BJ (cell line): ENCODE measurements at regions of chr5 and their contacts with region 1.

Region 1: GRCh38 chr5:155136216-155136850 is 122.8 kb downstream of the KIF4B start:
- DNase-seq: no peak
- H3K4me3 ChIP-seq: no peak overlapping the region
- H3K27me3 ChIP-seq: no peaks in the 10 kb centered on the region; the same call in 1 of the 2 replicates
- CTCF ChIP-seq: no peak

Region 2: DNA sequence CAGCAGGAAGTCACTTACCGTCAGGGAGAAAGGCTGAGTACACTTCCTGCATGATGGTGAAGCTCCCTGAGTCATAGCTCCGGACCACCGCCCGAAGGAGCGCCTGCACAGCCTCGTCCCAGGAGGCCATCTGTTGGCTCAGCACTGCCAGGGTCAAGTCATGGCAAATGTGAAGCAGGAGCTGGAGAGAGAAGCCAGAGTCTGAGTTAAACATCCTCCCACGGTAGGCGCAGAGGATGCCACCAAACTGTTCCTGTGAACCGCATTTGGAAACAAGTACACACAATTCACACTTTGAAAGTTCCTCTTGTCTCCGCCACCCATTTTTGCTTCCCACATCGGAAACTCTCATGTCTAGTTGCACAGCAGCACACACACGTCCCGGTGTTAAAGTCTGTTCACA is 244.0 kb before region 1 on chr5:
- CTCF ChIA-PET with region 1: no interaction called
- POLR2A ChIA-PET with region 1: no interaction called
- DNase-seq: no peak
- H3K4me3 ChIP-seq: no peak overlapping the region
- H3K27me3 ChIP-seq: no peaks in the 10 kb centered on the region
- CTCF ChIP-seq: no peak

Region 3: DNA sequence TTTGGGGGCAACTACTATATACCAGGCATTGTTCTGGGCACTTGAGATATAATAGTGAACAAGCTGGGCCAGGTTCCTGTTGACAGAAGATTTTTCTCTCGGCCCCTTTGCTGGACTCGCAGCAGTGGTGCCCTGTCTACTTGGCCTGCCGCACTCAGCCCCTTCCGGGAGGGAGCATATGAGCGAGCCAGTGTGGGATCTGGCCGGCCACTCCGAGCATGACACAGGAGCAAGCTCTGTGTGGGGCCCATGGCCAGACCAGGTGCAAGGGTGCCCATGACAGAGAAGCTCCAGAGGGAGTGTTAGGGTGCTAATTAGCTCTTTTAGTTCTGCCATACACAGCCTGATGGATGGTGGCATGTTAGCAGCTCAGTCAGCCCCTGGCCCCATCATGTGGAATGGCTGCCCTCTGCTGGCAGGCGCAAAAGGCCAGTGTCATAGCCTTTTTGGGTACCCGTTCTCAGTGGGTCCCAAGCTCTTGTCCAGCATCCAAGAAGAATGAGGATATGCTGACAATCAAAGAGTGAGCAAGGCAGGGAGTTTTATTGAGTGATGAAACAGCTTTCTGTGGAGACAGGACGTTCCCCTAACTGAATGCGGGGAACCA is 132.1 kb before region 1 on chr5:
- CTCF ChIA-PET with region 1: no interaction called
- POLR2A ChIA-PET with region 1: no interaction called
- DNase-seq: no peak
- H3K4me3 ChIP-seq: no peak overlapping the region
- H3K27me3 ChIP-seq: no peaks in the 10 kb centered on the region
- CTCF ChIP-seq: peak; percentile 52

Region 4: DNA sequence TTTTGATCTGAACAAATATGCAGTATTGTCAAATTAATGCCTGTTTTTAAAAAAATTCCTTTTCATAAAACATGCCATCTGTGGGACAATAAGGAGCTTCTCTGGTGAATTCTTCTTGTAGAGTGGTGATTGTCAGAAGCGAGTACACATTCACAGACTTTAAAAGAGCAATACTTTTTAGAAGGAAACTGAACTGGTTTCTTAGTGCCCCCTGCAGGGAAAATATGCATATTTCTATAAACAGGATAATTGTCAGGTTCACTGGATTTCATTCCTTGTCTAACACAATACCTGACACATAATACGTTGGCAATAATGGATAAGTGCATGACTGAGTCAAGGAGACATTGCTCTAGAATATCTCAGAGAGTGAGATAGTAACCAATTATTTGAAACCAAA is 10.9 kb after region 1 on chr5:
- CTCF ChIA-PET with region 1: interaction called, 12 read pairs
- POLR2A ChIA-PET with region 1: no interaction called
- DNase-seq: no peak
- H3K4me3 ChIP-seq: no peak overlapping the region
- H3K27me3 ChIP-seq: no peaks in the 10 kb centered on the region
- CTCF ChIP-seq: peak; percentile 28

Region 5: DNA sequence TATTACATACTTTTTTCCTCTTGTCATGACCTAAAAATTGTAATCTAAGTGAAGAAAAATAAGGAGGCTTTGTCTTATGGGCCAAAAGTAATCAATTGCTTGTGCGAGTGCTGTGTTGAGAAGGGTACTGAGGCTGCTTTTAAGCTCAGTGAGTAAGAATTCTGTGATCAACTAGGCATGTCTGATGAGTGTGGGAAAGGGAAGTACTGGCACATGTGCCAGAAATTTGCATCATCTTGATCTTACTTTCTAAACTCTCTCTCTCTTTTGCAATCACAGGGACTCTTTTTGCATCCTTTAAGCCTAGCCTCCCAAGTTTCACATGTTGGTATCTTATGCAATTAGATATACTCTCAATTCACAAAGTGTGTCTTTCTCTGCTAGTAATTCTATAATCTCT is 207.1 kb after region 1 on chr5:
- CTCF ChIA-PET with region 1: no interaction called
- POLR2A ChIA-PET with region 1: no interaction called
- DNase-seq: no peak
- H3K4me3 ChIP-seq: no peak overlapping the region
- H3K27me3 ChIP-seq: no peaks in the 10 kb centered on the region
- CTCF ChIP-seq: no peak

Region 6: GRCh38 chr5:155480731-155481131 is 344.4 kb after region 1 on chr5:
- CTCF ChIA-PET with region 1: no interaction called
- POLR2A ChIA-PET with region 1: no interaction called
- DNase-seq: no peak
- H3K4me3 ChIP-seq: no peak overlapping the region
- H3K27me3 ChIP-seq: no peaks in the 10 kb centered on the region
- CTCF ChIP-seq: no peak